ENCODE measurements at regions of chr7 and their contacts with region 1.

Region 1: DNA sequence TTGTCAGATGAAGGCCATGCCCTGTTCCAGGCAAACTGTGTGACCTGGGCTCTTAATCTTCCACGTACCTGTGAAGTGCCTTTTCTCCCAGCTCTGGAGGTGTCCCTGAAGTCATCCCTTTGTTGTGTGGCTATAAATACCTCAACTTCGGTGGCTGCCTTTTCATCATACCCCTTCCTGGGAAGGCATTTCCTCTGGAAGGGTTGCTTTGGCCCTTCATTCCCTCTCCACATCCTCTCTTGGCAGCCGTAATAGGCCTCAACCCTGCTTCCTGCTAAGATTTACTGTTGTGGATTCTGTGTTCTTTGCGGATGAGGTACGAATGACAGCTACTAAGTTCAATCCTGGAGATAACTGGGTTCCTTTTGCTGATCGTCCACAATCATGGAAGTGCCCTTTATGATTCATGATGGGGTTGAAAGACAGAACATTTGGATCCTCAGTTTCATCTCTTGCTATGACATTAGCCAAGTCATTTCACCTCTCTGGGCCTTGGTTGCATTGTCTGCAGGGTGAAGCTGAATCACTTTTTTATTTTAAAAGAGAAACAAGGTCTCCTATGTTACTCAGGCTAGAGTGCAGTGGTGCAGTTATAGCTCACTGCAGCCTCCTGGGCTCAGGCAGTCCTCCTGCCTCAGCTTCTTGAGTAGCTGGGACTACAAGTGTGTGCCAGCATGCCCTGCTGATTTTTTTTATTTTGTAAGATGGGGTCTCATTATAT is 23.6 kb downstream of the FKBP6 start:
- DNase-seq: no peak
- H3K4me3 ChIP-seq: no peak overlapping the region
- CTCF ChIP-seq: no peak

Region 2: GRCh38 chr7:73387221-73387828 is 35.7 kb after region 1 on chr7:
- in situ Hi-C with region 1: no loop called
- DNase-seq: no peak
- H3K4me3 ChIP-seq: no peak overlapping the region
- CTCF ChIP-seq: no peak

Region 3: DNA sequence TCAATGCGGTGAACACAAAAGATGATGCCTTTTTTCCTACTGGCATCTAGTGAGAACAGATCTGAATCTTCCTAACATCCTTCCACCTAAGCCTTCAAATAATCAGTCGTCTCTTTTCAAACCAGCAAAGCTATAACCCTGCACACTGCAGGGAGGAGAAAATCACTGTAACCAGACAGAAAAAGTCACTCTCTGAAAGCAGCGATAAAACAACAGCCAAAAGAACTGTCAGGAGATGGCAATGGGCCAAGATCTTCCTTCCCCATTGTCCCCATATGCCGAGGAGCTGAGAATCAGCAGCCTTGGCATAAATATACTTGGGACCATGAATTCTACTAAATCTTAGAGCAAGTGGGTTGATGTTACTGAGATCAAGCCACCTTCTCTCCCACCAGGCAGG is 95.1 kb after region 1 on chr7:
- in situ Hi-C with region 1: loop called (anchors 10 kb)
- DNase-seq: no peak
- H3K4me3 ChIP-seq: no peak overlapping the region
- CTCF ChIP-seq: no peak

Measured in astrocyte of the cerebellum (primary cell).